CD8-positive, alpha-beta T cell (primary cell): ENCODE measurements at regions of chr11 and their contacts with region 1.

Region 1: DNA sequence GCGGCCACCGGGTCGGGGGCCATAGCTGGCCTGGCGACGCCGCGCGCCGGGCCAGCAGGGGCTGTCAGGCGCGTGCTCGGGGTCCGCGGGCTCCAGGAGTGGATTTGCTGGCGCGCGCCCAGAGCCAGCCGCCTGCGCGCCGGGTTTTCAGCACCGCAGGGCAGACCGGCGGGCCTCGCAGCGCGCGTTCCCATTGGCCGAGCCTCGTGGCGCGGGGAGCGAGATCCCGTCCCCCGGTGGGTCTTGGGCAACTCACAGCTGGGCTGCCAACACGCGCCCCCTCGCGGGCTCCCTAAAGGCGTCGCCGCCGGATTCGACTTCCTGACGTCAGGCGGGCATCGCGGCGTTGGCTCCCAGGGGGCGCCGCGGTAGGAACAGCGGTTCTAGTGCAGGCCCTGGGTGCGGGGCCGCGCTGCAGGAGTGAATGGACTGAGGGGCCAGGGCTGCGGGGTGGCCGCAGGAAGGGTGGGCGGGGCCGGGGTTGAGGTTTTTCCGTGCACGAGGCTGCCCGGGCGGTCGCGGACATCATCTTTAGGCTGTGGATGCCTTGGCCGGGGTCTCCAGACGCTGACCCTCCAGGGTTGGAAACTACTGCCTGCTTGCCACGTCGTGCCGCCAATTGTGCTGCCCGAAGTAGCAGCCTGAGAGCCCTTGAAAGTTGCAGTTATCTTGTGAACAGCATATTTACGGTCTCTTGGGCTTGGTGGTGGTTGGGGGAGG is at the start of gene FADS1:
- DNase-seq: peak; percentile 26 to 87 (median 73)
- ATAC-seq: peak; percentile 60
- H3K4me3 ChIP-seq: peak within 1 kb of the TSS; percentile 57 to 73
- H3K4me3 Mint-ChIP-seq: peak within 1 kb of the TSS; percentile 94
- H3K27ac ChIP-seq: peak within 1 kb of the TSS; percentile 10 to 27
- H3K27ac Mint-ChIP-seq: peak within 1 kb of the TSS; percentile 71
- H3K4me1 ChIP-seq: peaks cover 12% of the 10 kb centered on the region
- H3K4me1 Mint-ChIP-seq: peaks cover 17% of the 10 kb centered on the region
- H3K27me3 ChIP-seq: peaks cover 0 to 3% of the 10 kb centered on the region in 2 experiments
- H3K27me3 Mint-ChIP-seq: no peaks in the 10 kb centered on the region
- CTCF ChIP-seq: no peak
- total RNA-seq, gene FADS1: 3.1 TPM

Region 2: DNA sequence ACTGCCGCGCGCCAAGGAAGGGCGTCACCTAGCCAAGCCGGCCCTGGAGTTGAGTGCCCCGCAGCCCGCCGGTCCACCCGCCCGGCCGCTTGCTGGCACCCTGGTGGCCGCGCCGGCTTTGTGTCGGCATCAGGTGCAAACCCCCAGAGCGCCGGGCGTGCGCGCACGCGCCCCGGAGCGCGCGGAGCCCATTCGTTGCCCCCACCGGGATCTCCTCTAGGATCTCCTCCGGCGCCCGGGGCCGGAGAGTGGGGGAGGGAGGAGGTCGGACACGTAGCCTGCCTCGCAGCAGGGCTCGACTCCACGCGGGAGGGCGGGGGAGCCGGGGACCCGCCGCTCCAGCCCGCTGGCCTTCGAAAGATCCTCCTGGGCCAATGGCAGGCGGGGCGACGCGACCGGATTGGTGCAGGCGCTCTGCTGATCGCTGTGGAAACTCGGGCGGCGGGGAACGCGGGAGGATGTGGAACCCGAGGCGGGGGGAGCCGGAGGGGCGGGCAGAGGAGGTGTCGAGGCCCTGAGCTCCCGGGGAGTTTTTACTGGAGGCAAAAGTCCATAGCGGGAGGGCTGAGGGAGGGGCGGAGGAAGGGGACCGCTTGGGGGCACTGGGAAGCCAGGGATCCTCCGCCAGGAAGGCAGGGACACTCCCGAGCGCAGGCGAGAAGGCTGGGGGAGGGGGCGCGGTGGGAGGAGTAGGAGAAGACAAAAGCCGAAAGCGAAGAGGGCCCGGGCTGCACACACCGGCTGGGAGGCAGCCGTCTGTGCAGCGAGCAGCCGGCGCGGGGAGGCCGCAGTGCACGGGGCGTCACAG is 10.9 kb after region 1 on chr11 and contains the start of gene FADS2:
- CTCF ChIA-PET with region 1: interaction called, 9 read pairs
- POLR2A ChIA-PET with region 1: interaction called, 20 read pairs
- intact Hi-C with region 1: loop called in 1 of 2 experiments (anchors 1 kb)
- DNase-seq: peak in 8 of 9 experiments; percentile 33 to 83 (median 66)
- ATAC-seq: peak; percentile 82
- H3K4me3 ChIP-seq: peak within 1 kb of the TSS; percentile 59 to 86
- H3K4me3 Mint-ChIP-seq: peak within 1 kb of the TSS; percentile 83
- H3K27ac ChIP-seq: peak within 1 kb of the TSS in 1 of 2 experiments; percentile 42
- H3K27ac Mint-ChIP-seq: no peak within 1 kb of the TSS
- H3K4me1 ChIP-seq: peaks cover 26% of the 10 kb centered on the region
- H3K4me1 Mint-ChIP-seq: peaks cover 19% of the 10 kb centered on the region
- H3K27me3 ChIP-seq: peaks cover 0 to 5% of the 10 kb centered on the region in 2 experiments
- H3K27me3 Mint-ChIP-seq: peaks cover 10% of the 10 kb centered on the region
- CTCF ChIP-seq: no peak
- total RNA-seq, gene FADS2: 0.31 to 0.52 TPM

Region 3: DNA sequence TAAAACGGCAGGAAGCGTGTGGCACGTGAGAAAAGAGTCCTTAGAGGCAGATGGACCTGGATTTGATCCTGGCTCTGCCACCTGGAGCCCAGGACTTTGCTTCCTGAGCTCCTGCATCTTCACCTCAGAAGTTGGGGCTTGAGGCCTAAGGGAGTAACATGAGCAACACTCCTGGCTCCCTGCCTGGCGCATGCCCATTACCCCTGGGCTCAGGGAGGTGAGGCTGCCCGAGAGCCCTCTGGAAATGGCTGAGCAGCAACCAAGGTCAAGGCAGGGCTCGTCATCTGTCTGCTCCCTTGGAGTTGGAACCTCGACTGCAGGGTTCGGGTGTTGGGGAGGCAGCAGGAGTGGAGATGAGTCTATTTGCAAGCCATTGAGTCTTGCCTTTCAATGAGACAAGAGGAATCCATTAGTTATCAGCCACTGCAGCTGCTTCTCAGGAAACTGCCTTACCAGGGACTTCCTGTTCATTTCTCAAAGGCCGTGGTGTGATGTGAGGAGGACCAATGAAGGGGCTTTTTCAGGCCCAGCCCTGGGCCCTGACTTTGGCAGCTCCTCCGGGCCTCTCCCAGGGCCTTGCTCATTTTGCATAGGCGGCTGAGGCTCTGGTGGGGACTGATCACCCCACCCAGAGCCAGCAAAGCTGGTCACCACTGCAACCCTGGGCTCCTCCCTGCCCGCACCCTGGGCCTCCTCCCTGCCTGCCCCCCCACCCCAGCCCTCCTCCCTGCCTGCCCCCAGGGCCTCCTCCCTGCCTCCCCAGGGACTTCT is 17.6 kb after region 1 on chr11:
- CTCF ChIA-PET with region 1: interaction called, 9 read pairs
- POLR2A ChIA-PET with region 1: interaction called, 20 read pairs
- intact Hi-C with region 1: no loop called
- DNase-seq: peak in 7 of 9 experiments; percentile 36 to 83 (median 56)
- ATAC-seq: peak; percentile 92
- H3K4me3 ChIP-seq: no peak overlapping the region
- H3K4me3 Mint-ChIP-seq: peak overlapping the region; percentile 19
- H3K27ac ChIP-seq: peak overlapping the region; percentile 34 to 76
- H3K27ac Mint-ChIP-seq: no peak overlapping the region
- H3K4me1 ChIP-seq: peaks cover 22% of the 10 kb centered on the region
- H3K4me1 Mint-ChIP-seq: peaks cover 26% of the 10 kb centered on the region
- H3K27me3 ChIP-seq: no peaks in the 10 kb centered on the region
- H3K27me3 Mint-ChIP-seq: peaks cover 10% of the 10 kb centered on the region
- CTCF ChIP-seq: no peak

Region 4: DNA sequence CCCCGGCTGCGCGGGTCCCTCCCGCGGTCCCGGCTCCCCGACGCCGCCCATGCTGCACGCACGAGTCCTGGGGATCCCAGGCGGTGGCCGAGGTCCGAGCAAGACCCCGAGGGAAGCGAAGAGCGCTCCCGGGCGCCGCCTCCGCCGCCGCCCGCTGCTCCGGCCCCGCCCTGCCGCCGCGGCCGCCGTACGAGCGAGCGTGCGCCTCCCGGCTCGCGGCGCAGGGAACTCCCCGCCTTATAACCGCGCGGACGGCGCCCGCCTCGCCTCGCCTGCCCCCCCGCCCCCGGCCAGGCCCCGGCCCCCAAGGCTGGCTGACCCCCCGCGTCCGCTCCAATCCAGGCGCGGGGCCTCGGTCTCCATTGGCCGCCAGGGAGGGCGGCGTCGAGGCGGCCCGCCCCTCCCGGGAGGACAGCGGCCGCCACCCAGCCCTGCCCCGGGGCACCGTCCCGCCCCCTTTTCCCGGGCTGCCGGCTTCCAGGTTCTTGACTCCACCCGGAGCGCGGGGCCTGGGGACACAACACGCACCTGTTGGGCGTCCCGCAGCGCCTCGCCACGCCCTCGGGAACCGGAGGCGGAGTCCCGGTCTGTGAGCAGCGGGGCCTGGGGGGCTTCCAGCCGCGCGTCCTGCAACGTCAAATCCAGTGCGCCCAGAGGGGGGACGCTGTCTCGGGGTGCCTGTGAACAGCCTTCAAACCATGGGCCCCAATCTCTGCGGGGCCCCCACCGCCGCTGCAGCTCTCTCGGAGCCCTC is 74.6 kb after region 1 on chr11 and contains the start of gene FADS3:
- CTCF ChIA-PET with region 1: no interaction called
- POLR2A ChIA-PET with region 1: no interaction called
- intact Hi-C with region 1: loop called in 1 of 2 experiments (anchors 5 kb)
- DNase-seq: peak; percentile 23 to 89 (median 65)
- ATAC-seq: peak; percentile 61
- H3K4me3 ChIP-seq: peak within 1 kb of the TSS; percentile 67 to 70
- H3K4me3 Mint-ChIP-seq: peak within 1 kb of the TSS; percentile 81
- H3K27ac ChIP-seq: peak within 1 kb of the TSS in 1 of 2 experiments; percentile 54
- H3K27ac Mint-ChIP-seq: no peak within 1 kb of the TSS
- H3K4me1 ChIP-seq: peaks cover 11% of the 10 kb centered on the region
- H3K4me1 Mint-ChIP-seq: peaks cover 4% of the 10 kb centered on the region
- H3K27me3 ChIP-seq: no peaks in the 10 kb centered on the region
- H3K27me3 Mint-ChIP-seq: peaks cover 1% of the 10 kb centered on the region
- CTCF ChIP-seq: no peak
- total RNA-seq, gene FADS3: 11.5 to 14.9 TPM

Region 5: DNA sequence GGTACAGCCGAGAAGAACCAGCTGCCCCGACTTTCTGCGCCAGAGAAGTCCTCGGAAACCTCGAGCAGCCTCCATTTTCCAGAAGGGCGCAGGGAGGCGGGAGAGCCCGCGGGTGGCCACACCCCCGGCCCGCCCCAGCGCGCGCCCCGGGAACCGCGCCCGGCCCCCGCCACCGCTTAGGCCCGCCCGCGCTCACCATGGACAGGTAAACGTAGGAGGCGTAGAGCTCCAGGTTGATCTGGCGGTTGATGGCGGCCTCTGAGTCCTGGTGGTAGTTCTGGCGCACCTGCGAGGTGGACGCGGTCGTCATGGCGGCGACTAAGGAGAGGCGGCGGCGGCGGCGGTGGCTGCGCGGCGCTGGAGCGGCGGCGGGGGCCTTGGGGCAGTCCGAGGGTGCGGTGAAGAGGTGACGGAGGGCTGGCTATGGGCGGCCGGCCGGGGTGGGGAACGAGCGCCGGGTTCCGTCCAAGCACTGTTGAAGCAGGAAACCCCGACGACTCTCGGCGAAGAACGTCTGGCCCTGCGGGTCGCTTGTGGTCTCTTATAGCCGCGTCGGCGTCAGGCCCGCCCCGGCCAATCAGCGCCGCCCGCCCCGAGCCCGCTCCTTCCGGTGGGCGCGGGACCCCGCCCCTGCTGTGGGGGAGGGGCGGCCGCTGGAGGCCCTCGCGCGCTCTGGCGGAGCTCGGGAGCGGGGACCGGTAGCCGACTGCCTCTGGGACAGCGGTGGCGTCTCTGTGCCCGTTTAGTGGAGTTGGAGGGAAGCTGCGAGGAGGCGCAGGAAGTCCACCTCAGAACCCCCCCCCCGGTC is 150.4 kb after region 1 on chr11 and contains the start of gene FTH1:
- CTCF ChIA-PET with region 1: no interaction called
- POLR2A ChIA-PET with region 1: interaction called, 19 read pairs
- intact Hi-C with region 1: no loop called
- DNase-seq: peak; percentile 82 to 95 (median 91)
- ATAC-seq: peak; percentile 74
- H3K4me3 ChIP-seq: peak within 1 kb of the TSS; percentile 98 to 100
- H3K4me3 Mint-ChIP-seq: peak within 1 kb of the TSS; percentile 96
- H3K27ac ChIP-seq: peak within 1 kb of the TSS; percentile 72 to 96
- H3K27ac Mint-ChIP-seq: peak within 1 kb of the TSS; percentile 98
- H3K4me1 ChIP-seq: peaks cover 43% of the 10 kb centered on the region
- H3K4me1 Mint-ChIP-seq: peaks cover 59% of the 10 kb centered on the region
- H3K27me3 ChIP-seq: no peaks in the 10 kb centered on the region
- H3K27me3 Mint-ChIP-seq: no peaks in the 10 kb centered on the region
- CTCF ChIP-seq: no peak
- total RNA-seq, gene FTH1: 2,788 to 2,859 TPM